Vagina (tissue), 2 donors: ENCODE measurements at regions of chr1 and their contacts with region 1.

Region 1: GRCh38 chr1:15152318-15153183 is 996 bp upstream of the TMEM51 start:
- DNase-seq: peak in 1 of 2 donors; percentile 95
- H3K4me3 ChIP-seq: peak overlapping the region; percentile 72 to 78
- H3K27ac ChIP-seq: peak overlapping the region; percentile 96
- H3K4me1 ChIP-seq: peaks cover 35% of the 10 kb centered on the region
- H3K27me3 ChIP-seq: no peaks in the 10 kb centered on the region
- CTCF ChIP-seq: peak; percentile 34 to 65 (median 42)
- POLR2A ChIP-seq: no peak

Region 2: GRCh38 chr1:15218287-15219279 is 66.0 kb after region 1 on chr1:
- intact Hi-C with region 1: loop called (anchors 10 kb)
- DNase-seq: no peak
- H3K4me3 ChIP-seq: no peak overlapping the region
- H3K27ac ChIP-seq: no peak overlapping the region
- H3K4me1 ChIP-seq: peaks cover 26% of the 10 kb centered on the region
- H3K27me3 ChIP-seq: no peaks in the 10 kb centered on the region
- CTCF ChIP-seq: no peak
- POLR2A ChIP-seq: no peak

Region 3: DNA sequence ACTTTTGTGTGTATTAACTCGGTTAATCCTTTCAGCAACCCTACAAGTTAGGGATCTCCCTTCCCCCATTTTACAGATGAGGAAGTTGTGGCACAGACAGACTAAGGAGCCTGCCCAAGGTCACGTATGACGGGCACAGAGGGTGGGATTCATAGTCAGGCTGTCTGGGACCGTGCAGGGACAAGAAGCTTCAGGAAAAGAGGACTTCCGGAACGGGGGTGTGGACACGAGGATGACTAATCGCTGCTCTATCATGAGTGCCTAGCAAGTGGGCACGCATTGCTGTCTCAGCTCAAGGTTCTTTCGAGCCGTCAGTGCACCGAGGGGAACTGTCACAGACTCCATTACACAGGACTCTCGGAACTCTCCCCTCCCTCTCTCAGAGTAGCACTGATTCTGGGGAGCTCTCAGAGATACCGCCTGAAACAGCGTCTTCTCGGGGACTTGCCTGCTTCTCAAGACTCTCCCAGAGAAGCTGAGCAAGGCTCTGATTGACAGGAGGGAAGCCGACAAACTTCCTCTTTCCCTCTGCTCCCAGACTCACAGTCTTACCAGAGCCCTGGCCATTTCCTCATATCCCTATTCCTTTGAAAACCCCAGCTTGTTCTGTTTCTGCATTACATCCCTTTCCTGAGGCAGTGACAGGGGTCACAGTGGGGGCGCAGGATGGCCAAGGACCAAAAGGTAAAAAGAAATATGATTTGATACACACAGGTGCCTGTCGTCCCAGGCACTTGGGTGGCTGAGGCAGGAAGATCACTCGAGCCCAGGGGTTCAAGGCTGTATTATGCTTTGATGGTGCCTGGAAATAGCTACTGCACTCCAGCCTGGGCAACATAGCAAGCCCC is 108.8 kb after region 1 on chr1:
- intact Hi-C with region 1: no loop called
- DNase-seq: peak in 1 of 2 donors; percentile 29
- H3K4me3 ChIP-seq: no peak overlapping the region
- H3K27ac ChIP-seq: no peak overlapping the region
- H3K4me1 ChIP-seq: peaks cover 14% of the 10 kb centered on the region
- H3K27me3 ChIP-seq: no peaks in the 10 kb centered on the region
- CTCF ChIP-seq: no peak
- POLR2A ChIP-seq: no peak

Region 4: GRCh38 chr1:15272009-15272788 is 119.6 kb after region 1 on chr1:
- intact Hi-C with region 1: loop called (anchors 2 kb)
- DNase-seq: peak in 1 of 2 donors; percentile 86
- H3K4me3 ChIP-seq: no peak overlapping the region
- H3K27ac ChIP-seq: no peak overlapping the region
- H3K4me1 ChIP-seq: no peaks in the 10 kb centered on the region
- H3K27me3 ChIP-seq: no peaks in the 10 kb centered on the region
- CTCF ChIP-seq: peak; percentile 59 to 89 (median 66)
- POLR2A ChIP-seq: no peak